ENCODE measurements at regions of chr17 and their contacts with region 1.

Region 1: DNA sequence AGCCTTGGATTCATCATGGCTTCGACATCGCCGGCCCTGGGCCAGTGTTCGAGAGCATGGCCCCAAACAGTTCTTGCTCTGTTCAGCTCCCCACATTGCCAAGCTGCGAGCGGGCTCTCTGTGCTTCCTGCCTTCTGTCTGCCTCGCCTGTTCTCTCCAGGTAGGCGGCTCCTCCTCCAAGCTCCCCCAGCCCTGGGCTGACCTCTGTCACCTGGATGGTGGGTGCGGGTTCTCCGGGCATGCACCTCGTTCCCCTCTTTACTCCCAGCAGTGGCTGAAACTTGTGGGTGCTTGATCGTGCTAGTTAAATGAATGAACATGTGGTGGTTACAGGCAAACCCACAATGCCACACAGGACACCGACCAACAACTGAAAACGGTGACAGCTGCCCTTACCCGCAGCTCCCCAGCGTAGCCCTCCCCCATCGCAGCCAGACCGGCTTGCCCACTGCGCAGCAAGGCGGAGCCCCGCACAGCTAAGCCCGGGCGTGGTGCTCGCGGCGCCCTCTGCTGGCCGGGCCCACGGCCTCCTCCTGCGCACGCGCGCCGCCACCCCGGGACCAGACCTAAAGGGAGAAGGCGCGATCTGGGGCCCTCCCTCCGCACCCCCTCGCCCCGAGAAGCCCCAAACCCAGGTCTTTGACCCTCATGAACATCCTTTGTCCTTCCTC is 23.0 kb upstream of the EIF1 start:
- DNase-seq: peak; percentile 93
- CTCF ChIP-seq: peak; percentile 95

Region 2: GRCh38 chr17:40647624-40648383 is 1017.9 kb before region 1 on chr17 and contains the start of gene SMARCE1:
- CTCF ChIA-PET with region 1: interaction called, 11 read pairs
- POLR2A ChIA-PET with region 1: no interaction called
- DNase-seq: peak; percentile 81
- CTCF ChIP-seq: no peak

Region 3: GRCh38 chr17:40818733-40819527 is 846.8 kb before region 1 on chr17:
- CTCF ChIA-PET with region 1: interaction called, 17 read pairs
- POLR2A ChIA-PET with region 1: no interaction called
- DNase-seq: peak; percentile 85
- CTCF ChIP-seq: no peak

Region 4: GRCh38 chr17:40909351-40909750 is 756.4 kb before region 1 on chr17:
- CTCF ChIA-PET with region 1: interaction called, 24 read pairs
- POLR2A ChIA-PET with region 1: no interaction called
- DNase-seq: peak; percentile 67
- CTCF ChIP-seq: peak; percentile 62

Region 5: DNA sequence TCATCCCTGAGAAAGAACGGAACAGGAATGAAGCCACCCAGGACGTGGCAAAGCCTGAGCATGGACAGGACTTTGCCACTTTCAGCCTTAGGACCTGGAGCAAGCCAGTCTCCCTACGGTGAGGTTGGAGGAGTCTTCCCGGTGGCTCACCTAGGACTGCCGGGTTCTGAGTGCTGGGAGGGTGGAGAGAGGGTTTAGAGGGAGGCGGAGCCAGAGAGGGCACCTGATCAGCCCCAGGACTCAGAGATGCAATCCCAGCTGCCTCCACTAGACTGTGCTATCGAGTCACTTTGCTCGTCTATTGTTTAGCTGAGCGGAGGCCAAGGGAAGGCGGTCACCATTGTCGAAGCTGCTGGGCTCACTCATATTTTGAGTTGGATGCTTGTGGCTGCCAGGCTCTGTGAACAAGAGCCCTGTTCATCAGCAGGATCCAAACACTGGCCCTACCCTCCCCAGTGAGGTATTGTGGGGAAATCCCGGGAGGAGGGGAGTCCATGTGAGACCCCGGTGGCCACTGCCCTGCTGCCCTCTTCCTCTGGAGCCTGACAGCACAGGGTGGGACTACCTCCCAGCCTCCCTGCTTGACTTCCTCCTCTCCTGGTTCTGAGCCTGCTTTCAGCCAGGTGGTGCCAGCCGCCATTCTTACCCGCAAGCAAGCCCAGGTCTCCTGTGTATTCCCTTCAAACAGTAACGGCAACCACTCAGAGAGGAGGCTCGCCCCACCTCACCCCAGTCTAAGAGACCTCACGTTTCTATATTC is 86.0 kb before region 1 on chr17:
- CTCF ChIA-PET with region 1: interaction called, 17 read pairs
- POLR2A ChIA-PET with region 1: no interaction called
- DNase-seq: peak; percentile 87
- CTCF ChIP-seq: peak; percentile 48

Region 6: GRCh38 chr17:41648411-41649195 is 17.1 kb before region 1 on chr17:
- CTCF ChIA-PET with region 1: interaction called, 533 read pairs
- POLR2A ChIA-PET with region 1: no interaction called
- DNase-seq: peak; percentile 89
- CTCF ChIP-seq: peak; percentile 87

Region 7: GRCh38 chr17:41688699-41689496 is 23.2 kb after region 1 on chr17 and contains the start of gene EIF1:
- CTCF ChIA-PET with region 1: interaction called, 36 read pairs
- POLR2A ChIA-PET with region 1: interaction called, 23 read pairs
- DNase-seq: peak; percentile 96
- CTCF ChIP-seq: no peak

Region 8: DNA sequence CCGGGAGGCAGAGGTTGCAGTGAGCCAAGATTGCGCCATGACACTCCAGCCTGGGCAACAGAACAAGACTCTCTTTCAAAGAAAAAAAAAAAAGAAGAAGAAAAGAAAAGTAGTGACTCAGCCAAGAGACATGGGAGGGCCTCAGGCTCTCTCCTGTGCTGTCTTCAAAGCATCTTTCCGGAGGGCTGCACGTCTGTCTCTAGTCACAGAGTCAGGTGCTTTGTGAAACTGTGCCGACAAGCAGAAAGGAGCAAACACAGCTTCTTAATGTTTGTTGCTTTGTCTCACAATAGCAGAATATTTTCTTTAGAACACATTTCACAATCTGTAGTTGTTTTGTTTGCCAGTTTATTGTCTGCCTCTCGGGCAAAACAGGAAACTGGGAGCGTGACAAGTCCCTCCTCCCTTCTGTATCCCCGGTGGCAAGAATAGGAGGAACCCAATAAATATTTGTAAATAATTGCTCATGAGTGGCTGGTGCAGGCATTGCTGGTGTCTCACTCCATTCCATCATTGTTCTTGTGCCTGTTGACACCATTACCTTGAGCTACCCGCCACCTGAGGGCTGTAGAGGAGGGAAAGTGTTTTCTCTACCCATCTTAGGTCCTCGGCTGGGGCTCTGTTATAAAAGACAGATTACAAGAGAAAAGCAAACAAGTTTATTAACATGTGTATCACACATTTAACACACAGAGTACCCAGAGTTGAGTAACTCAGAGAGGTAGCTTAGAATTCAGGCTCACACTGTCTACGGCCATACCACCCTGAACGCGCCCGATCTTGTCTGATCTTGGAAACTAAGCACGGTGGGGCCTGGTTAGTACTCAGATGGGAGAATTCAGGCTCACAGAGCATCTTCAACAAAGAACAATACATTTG is 51.9 kb after region 1 on chr17:
- CTCF ChIA-PET with region 1: no interaction called
- POLR2A ChIA-PET with region 1: no interaction called
- DNase-seq: no peak
- CTCF ChIP-seq: no peak

Region 9: GRCh38 chr17:42097691-42098631 is 432.3 kb after region 1 on chr17 and contains the start of gene ZNF385C:
- CTCF ChIA-PET with region 1: no interaction called
- POLR2A ChIA-PET with region 1: no interaction called
- DNase-seq: peak; percentile 71
- CTCF ChIP-seq: no peak